ENCODE measurements at regions of chr17 and their contacts with region 1.

Region 1: GRCh38 chr17:1865252-1866037 is 35.6 kb downstream of the RPA1 start:
- DNase-seq: peak in 1 of 2 donors; percentile 51
- ATAC-seq: no peak
- H3K4me3 ChIP-seq: no peak overlapping the region
- H3K27ac ChIP-seq: peak overlapping the region; percentile 88 to 98 (median 92)
- H3K4me1 ChIP-seq: peaks cover 27% of the 10 kb centered on the region in 2 donors
- H3K27me3 ChIP-seq: no peaks in the 10 kb centered on the region
- CTCF ChIP-seq: peak; percentile 62 to 86 (median 75)
- POLR2A ChIP-seq: no peak

Region 2: DNA sequence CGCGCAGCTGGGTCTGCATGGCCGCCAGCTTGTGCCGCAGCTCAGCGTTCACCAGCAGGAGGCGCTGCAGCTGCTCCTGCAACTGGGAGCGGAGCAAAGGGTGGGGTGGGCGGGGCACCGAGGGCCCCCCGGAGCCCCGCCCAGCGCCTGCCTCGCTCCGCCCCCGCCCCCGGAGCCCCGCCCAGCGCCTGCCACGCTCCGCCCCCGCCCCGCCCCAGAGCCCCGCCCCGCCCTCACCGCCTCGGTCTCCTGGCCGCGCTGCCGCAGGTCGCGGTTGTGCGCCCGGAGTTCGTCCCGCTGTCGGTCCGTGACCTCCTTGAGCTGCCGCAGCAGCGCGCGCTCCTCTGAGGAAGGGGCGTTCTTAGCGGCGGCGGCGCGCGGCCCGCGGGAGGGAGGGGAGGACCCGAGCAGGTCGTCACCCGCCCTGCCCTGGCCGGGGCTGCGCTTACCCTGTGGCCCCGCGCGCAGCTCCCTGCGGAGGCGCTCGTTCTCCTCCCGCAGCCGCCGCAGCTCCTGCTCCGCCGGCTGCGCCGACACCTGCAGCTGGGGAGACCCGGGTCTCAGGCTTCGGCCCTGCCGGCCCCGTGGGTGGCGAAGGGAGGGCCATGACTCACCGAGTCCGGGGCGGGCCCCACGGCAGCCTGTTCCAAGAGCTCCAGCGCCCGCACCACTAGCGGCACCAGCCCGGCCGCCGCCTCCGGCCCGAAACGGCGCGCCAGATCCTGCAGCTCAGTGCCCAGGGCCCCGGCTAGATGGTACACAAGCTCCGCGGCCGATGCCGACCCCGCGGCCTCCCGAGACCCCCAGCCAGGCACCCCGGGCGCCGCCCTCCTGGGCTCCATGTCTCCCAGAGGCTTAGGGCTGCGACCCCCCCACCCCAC is 216.2 kb before region 1 on chr17:
- in situ Hi-C with region 1: loop called in 2 of 4 experiments (anchors 25 kb)
- intact Hi-C with region 1: no loop called
- DNase-seq: peak; percentile 86 to 94
- ATAC-seq: peak; percentile 55 to 66
- H3K4me3 ChIP-seq: peak overlapping the region; percentile 64 to 96 (median 80)
- H3K27ac ChIP-seq: peak overlapping the region; percentile 95 to 100 (median 99)
- H3K4me1 ChIP-seq: peaks cover 33 to 36% of the 10 kb centered on the region in 2 donors
- H3K27me3 ChIP-seq: no peaks in the 10 kb centered on the region
- CTCF ChIP-seq: peak in 2 of 5 experiments; percentile 88 to 98
- POLR2A ChIP-seq: peak; percentile 84 to 86

Region 3: GRCh38 chr17:1673041-1673785 is 192.2 kb before region 1 on chr17:
- in situ Hi-C with region 1: loop called (anchors 10 to 25 kb)
- intact Hi-C with region 1: loop called (anchors 1 kb)
- DNase-seq: peak in 1 of 2 donors; percentile 25
- ATAC-seq: no peak
- H3K4me3 ChIP-seq: no peak overlapping the region
- H3K27ac ChIP-seq: peak overlapping the region; percentile 8 to 91 (median 38)
- H3K4me1 ChIP-seq: peaks cover 13 to 25% of the 10 kb centered on the region in 2 donors
- H3K27me3 ChIP-seq: no peaks in the 10 kb centered on the region
- CTCF ChIP-seq: no peak
- POLR2A ChIP-seq: no peak

Region 4: DNA sequence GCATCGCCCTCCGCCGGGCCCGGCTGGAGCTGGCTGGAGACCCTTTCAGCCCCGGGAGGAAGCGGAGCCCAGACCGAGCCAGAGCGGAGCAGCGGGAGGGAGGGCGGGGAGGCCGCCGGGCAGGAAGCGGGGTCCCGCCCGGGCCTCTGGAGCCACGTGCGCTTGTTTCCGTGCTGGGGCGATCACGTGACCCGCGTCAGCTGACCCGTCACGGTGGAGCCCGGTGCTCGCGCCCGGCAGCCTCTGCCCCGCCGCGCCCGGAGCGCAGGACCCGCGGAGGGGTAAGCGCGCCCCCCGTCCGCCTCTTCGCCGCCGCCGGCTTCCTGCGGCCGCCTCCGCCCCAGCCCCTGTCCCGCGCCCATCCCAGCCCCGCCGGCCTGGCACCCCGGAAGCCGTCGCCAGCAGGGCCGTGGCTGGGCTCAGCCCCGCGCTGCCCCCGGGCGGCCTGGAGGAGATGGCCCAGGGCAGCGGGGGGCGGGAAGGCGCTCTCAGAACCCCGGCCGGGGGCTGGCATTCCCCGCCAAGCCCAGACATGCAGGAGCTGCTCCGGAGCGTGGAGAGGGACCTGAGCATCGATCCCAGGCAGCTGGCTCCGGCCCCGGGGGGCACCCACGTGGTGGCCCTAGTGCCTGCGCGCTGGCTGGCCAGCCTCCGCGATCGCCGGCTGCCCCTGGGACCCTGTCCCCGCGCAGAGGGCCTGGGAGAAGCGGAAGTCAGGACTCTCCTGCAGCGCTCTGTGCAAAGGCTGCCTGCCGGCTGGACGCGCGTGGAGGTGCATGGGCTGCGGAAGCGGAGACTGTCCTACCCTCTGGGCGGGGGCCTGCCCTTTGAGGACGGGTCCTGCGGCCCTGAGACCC is 140.7 kb before region 1 on chr17 and contains the start of gene WDR81:
- in situ Hi-C with region 1: no loop called
- intact Hi-C with region 1: loop called (anchors 1 kb)
- DNase-seq: peak; percentile 91 to 93
- ATAC-seq: peak; percentile 71 to 78
- H3K4me3 ChIP-seq: peak within 1 kb of the TSS; percentile 62 to 88 (median 76)
- H3K27ac ChIP-seq: peak within 1 kb of the TSS; percentile 95 to 100 (median 99)
- H3K4me1 ChIP-seq: peaks cover 47 to 50% of the 10 kb centered on the region in 2 donors
- H3K27me3 ChIP-seq: no peaks in the 10 kb centered on the region
- CTCF ChIP-seq: peak in 4 of 5 experiments; percentile 6 to 61 (median 26)
- POLR2A ChIP-seq: peak; percentile 82 to 92
- total RNA-seq, gene WDR81: 22.3 to 61.1 (median 42.7) TPM

Region 5: GRCh38 chr17:1796800-1797199 is 68.6 kb before region 1 on chr17:
- in situ Hi-C with region 1: no loop called
- intact Hi-C with region 1: loop called (anchors 5 kb)
- DNase-seq: peak; percentile 63 to 68
- ATAC-seq: peak; percentile 92 to 95
- H3K4me3 ChIP-seq: no peak overlapping the region
- H3K27ac ChIP-seq: peak overlapping the region; percentile 90 to 97 (median 96)
- H3K4me1 ChIP-seq: peaks cover 46 to 59% of the 10 kb centered on the region in 2 donors
- H3K27me3 ChIP-seq: no peaks in the 10 kb centered on the region
- CTCF ChIP-seq: no peak
- POLR2A ChIP-seq: peak; percentile 40 to 58

Region 6: DNA sequence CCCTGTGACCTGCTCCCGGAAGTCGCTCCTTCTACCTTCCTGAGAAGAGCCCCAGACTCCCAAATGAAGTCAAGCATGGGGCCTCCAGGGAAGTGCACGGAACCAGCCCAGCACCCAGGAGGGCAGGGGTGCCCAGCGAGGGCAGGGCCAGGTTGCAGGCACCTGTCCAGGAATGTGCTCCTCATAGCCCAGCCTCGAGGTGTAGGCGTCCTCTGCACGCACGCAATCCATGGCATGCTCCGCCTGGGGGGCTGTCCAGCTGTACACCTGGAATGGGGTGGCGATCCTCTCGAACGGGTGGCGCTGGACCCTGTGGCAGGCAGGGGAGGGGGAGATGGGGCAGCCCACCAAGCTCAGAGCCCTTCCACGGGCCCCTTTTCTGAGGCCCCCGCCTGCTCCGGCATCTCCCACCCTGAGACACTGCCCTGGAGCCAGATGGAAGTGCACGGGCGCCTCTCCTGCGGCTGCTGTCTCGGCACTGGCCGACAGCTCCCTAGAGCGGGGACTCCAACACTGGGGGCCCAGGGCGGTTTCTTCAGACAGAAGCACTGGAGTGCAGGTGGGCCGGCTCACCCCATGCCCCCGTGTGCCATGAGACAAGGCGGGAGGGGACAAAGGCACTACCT is 835.2 kb after region 1 on chr17:
- in situ Hi-C with region 1: no loop called
- intact Hi-C with region 1: no loop called
- DNase-seq: peak in 1 of 2 donors; percentile 17
- ATAC-seq: no peak
- H3K4me3 ChIP-seq: no peak overlapping the region
- H3K27ac ChIP-seq: peak overlapping the region; percentile 71 to 98 (median 82)
- H3K4me1 ChIP-seq: peaks cover 14 to 18% of the 10 kb centered on the region in 2 donors
- H3K27me3 ChIP-seq: no peaks in the 10 kb centered on the region
- CTCF ChIP-seq: no peak
- POLR2A ChIP-seq: no peak

Measured in gastrocnemius medialis (tissue), 4 donors.